A673 (cell line): ENCODE measurements at regions of chr4 and their contacts with region 1.

Region 1: GRCh38 chr4:122602277-122603142 is 18.4 kb downstream of the IL21 start:
- DNase-seq: peak; percentile 64
- H3K4me3 ChIP-seq: no peak overlapping the region
- H3K27ac ChIP-seq: no peak overlapping the region
- H3K4me1 ChIP-seq: peaks cover 3% of the 10 kb centered on the region
- H3K27me3 ChIP-seq: no peaks in the 10 kb centered on the region
- CTCF ChIP-seq: peak; percentile 58

Region 2: GRCh38 chr4:122341906-122342305 is 260.6 kb before region 1 on chr4:
- CTCF ChIA-PET with region 1: no interaction called
- POLR2A ChIA-PET with region 1: no interaction called
- intact Hi-C with region 1: no loop called
- DNase-seq: no peak
- H3K4me3 ChIP-seq: no peak overlapping the region
- H3K27ac ChIP-seq: no peak overlapping the region
- H3K4me1 ChIP-seq: no peaks in the 10 kb centered on the region
- H3K27me3 ChIP-seq: no peaks in the 10 kb centered on the region
- CTCF ChIP-seq: no peak

Region 3: GRCh38 chr4:122716825-122717448 is 114.4 kb after region 1 on chr4:
- CTCF ChIA-PET with region 1: interaction called, 4 read pairs
- POLR2A ChIA-PET with region 1: no interaction called
- intact Hi-C with region 1: loop called (anchors 2 kb)
- DNase-seq: peak; percentile 81
- H3K4me3 ChIP-seq: no peak overlapping the region
- H3K27ac ChIP-seq: no peak overlapping the region
- H3K4me1 ChIP-seq: no peaks in the 10 kb centered on the region
- H3K27me3 ChIP-seq: no peaks in the 10 kb centered on the region
- CTCF ChIP-seq: peak; percentile 94

Region 4: GRCh38 chr4:123096038-123096437 is 493.5 kb after region 1 on chr4:
- CTCF ChIA-PET with region 1: no interaction called
- POLR2A ChIA-PET with region 1: no interaction called
- intact Hi-C with region 1: loop called (anchors 10 kb)
- DNase-seq: peak; percentile 80
- H3K4me3 ChIP-seq: no peak overlapping the region
- H3K27ac ChIP-seq: no peak overlapping the region
- H3K4me1 ChIP-seq: no peaks in the 10 kb centered on the region
- H3K27me3 ChIP-seq: no peaks in the 10 kb centered on the region
- CTCF ChIP-seq: peak; percentile 76